ENCODE measurements at regions of chr6 and their contacts with region 1.

Region 1: GRCh38 chr6:155069543-155069942 is 74.4 kb downstream of the TIAM2 start:
- DNase-seq: no peak
- H3K4me3 ChIP-seq: no peak overlapping the region
- H3K27ac ChIP-seq: no peak overlapping the region
- H3K4me1 ChIP-seq: no peaks in the 10 kb centered on the region
- H3K27me3 ChIP-seq: no peaks in the 10 kb centered on the region
- CTCF ChIP-seq: no peak
- POLR2A ChIP-seq: no peak

Region 2: DNA sequence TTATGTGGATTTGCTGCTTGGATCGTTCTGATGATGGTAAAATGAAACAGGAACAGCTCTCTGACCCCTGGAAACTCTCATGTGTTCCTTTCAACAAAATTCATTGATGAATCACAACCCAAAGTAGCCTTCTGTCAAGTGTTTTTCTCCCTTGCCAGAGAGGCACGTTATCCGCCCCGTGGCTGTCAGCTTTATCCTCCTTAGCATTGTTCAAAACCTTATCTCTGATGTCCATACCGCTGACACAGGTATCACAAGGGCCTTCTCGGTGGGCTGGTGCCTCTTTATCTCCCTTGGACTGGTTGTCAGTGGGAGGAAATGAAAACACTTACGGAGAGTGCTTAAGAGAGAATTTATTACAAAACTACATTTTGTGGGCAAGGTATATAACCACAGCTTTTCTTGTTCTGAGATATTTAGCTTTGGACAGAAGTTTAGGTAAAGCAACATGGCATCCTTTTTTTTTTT is 10.5 kb after region 1 on chr6:
- CTCF ChIA-PET with region 1: interaction called, 10 read pairs
- POLR2A ChIA-PET with region 1: no interaction called
- dilution Hi-C with region 1: no loop called
- intact Hi-C with region 1: no loop called
- DNase-seq: peak; percentile 93
- H3K4me3 ChIP-seq: no peak overlapping the region
- H3K27ac ChIP-seq: peak overlapping the region; percentile 73
- H3K4me1 ChIP-seq: peaks cover 23% of the 10 kb centered on the region
- H3K27me3 ChIP-seq: no peaks in the 10 kb centered on the region
- CTCF ChIP-seq: no peak
- POLR2A ChIP-seq: no peak

Region 3: DNA sequence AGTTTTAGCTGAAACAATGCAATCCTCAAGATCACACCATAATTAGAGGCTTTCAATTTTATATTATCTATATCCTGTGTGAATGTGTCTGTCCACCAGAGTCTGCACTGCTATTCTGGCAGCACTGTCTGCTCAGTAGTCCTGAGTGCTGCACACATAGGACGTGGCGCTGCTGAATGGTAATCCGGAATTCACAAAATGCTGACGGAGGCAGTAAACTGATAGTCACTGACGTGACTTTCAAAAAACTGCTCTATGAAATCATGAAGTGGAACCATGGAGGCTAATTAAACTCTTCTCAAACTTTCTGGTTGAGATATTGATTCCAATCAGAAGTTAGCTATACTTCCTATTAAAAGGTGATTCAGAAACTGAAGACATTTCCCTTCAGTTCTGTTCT is 576.9 kb after region 1 on chr6:
- CTCF ChIA-PET with region 1: no interaction called
- POLR2A ChIA-PET with region 1: no interaction called
- dilution Hi-C with region 1: no loop called
- intact Hi-C with region 1: no loop called
- DNase-seq: peak; percentile 31
- H3K4me3 ChIP-seq: no peak overlapping the region
- H3K27ac ChIP-seq: no peak overlapping the region
- H3K4me1 ChIP-seq: peaks cover 13% of the 10 kb centered on the region
- H3K27me3 ChIP-seq: no peaks in the 10 kb centered on the region
- CTCF ChIP-seq: no peak
- POLR2A ChIP-seq: no peak

Measured in endothelial cell of umbilical vein (primary cell).